ENCODE measurements at regions of chr11 and their contacts with region 1.

Region 1: DNA sequence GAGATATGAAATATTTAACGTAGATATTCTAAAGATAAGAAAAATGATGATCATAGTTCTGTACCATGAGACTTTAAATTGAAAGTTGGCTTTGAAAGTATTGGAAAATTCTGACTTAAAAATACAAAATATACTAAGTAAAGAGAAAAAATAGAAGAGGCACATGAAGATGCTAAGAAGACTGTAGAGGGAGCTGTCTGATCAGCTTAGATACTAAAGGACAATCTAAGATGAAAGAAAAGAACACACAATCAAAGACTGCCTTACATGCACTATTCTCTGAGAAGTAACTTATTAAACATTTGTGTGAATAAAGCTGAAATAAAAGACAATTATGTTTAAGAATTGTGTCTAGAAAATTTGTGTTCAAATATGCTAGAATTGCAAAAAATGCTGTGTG is 55.1 kb downstream of the RBMXL2 start:
- DNase-seq: no peak
- H3K4me3 ChIP-seq: no peak overlapping the region
- H3K27ac ChIP-seq: no peak overlapping the region
- H3K27me3 ChIP-seq: no peaks in the 10 kb centered on the region
- CTCF ChIP-seq: peak; percentile 48 to 92 (median 69)

Region 2: GRCh38 chr11:7088921-7089320 is 55.0 kb before region 1 on chr11 and contains the start of gene RBMXL2:
- intact Hi-C with region 1: no loop called
- DNase-seq: no peak
- H3K4me3 ChIP-seq: no peak within 1 kb of the TSS
- H3K27ac ChIP-seq: no peak within 1 kb of the TSS
- H3K27me3 ChIP-seq: peaks cover 0 to 48% (median 0%) of the 10 kb centered on the region in 45 donors
- CTCF ChIP-seq: no peak
- total RNA-seq, gene RBMXL2: 0.23 to 0.66 (median 0.36) TPM in 50 of 120 experiments, not detected in the others

Region 3: GRCh38 chr11:7278314-7278917 is 134.5 kb after region 1 on chr11:
- intact Hi-C with region 1: loop called in 1 of 2 experiments (anchors 10 kb)
- DNase-seq: no peak
- H3K4me3 ChIP-seq: no peak overlapping the region
- H3K27ac ChIP-seq: no peak overlapping the region
- H3K27me3 ChIP-seq: no peaks in the 10 kb centered on the region
- CTCF ChIP-seq: peak in 55 of 56 donors; percentile 32 to 79 (median 63)

Region 4: GRCh38 chr11:7651140-7651551 is 507.2 kb after region 1 on chr11:
- intact Hi-C with region 1: loop called in 1 of 2 experiments (anchors 5 kb)
- DNase-seq: peak in 2 of 10 donors; percentile 51 to 69
- H3K4me3 ChIP-seq: no peak overlapping the region
- H3K27ac ChIP-seq: peak overlapping the region; percentile 68 to 98 (median 92)
- H3K27me3 ChIP-seq: no peaks in the 10 kb centered on the region
- CTCF ChIP-seq: no peak